ENCODE measurements at regions of chr5 and their contacts with region 1.

Region 1: GRCh38 chr5:179907570-179908324 is at the start of gene TBC1D9B:
- DNase-seq: peak in 8 of 10 donors; percentile 38 to 93 (median 55)

Region 2: GRCh38 chr5:179858586-179859427 is 48.9 kb before region 1 on chr5 and contains the start of gene MRNIP:
- intact Hi-C with region 1: loop called (anchors 5 kb)
- DNase-seq: peak; percentile 94 to 100 (median 98)

Region 3: GRCh38 chr5:179878222-179879009 is 29.3 kb before region 1 on chr5:
- intact Hi-C with region 1: no loop called
- DNase-seq: peak in 2 of 10 donors; percentile 37 to 64

Region 4: GRCh38 chr5:180071531-180072255 is 163.9 kb after region 1 on chr5 and contains the start of gene RNF130:
- intact Hi-C with region 1: loop called (anchors 1 kb)
- DNase-seq: peak; percentile 86 to 99 (median 90)

Region 5: DNA sequence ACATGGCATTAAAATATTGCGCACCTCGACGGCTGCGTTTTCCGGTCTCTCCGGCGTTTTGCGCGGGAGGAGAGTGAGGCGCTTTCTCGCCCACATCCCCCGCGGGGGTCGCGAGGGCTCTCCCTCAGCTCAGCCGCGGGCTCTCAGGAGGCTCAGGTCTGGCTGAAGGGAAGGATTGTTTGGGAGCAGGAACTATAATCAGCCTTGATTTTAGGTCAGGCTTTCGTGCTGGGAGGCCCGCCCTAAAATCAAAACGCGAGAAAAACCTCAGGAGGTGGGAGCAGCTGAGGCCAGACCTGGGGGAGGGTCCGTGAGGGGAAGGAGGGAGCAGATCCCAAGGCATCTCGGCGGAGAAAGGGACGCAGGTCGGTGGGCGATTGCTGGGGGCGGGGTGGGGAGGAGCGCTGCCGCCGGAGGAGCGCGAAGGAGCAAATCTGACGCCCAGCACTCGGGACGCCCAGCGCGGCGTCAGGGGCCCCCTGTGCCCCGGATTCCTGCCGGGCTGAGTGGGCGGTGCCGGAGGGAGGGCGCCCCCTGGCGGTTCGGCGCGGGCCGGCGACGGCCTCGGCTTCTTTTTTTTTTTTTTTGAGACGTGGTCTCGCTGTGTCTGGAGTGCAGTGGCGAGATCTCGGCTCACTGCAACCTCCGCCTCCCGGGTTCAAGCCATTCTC is 182.5 kb after region 1 on chr5:
- intact Hi-C with region 1: loop called (anchors 2 kb)
- DNase-seq: peak in 8 of 10 donors; percentile 47 to 96 (median 64)